Heart left ventricle (tissue), 16 donors: ENCODE measurements at regions of chr1 and their contacts with region 1.

Region 1: GRCh38 chr1:178031856-178032320 is 62.0 kb upstream of the RASAL2 start:
- DNase-seq: peak; percentile 84 to 95 (median 91)
- ATAC-seq: peak; percentile 68 to 89 (median 82)
- H3K4me3 ChIP-seq: no peak overlapping the region
- H3K27ac ChIP-seq: peak overlapping the region in 1 of 12 donors; percentile 53
- H3K4me1 ChIP-seq: peaks cover 0 to 56% (median 8%) of the 10 kb centered on the region in 12 donors
- H3K27me3 ChIP-seq: no peaks in the 10 kb centered on the region
- CTCF ChIP-seq: peak; percentile 79 to 94 (median 88)
- POLR2A ChIP-seq: no peak

Region 2: GRCh38 chr1:177959811-177960515 is 71.9 kb before region 1 on chr1:
- intact Hi-C with region 1: loop called in 2 of 10 experiments (anchors 5 to 10 kb)
- DNase-seq: no peak
- ATAC-seq: peak; percentile 50 to 80 (median 70)
- H3K4me3 ChIP-seq: no peak overlapping the region
- H3K27ac ChIP-seq: no peak overlapping the region
- H3K4me1 ChIP-seq: no peaks in the 10 kb centered on the region
- H3K27me3 ChIP-seq: no peaks in the 10 kb centered on the region
- CTCF ChIP-seq: peak in 10 of 12 donors; percentile 16 to 52 (median 32)
- POLR2A ChIP-seq: no peak

Region 3: DNA sequence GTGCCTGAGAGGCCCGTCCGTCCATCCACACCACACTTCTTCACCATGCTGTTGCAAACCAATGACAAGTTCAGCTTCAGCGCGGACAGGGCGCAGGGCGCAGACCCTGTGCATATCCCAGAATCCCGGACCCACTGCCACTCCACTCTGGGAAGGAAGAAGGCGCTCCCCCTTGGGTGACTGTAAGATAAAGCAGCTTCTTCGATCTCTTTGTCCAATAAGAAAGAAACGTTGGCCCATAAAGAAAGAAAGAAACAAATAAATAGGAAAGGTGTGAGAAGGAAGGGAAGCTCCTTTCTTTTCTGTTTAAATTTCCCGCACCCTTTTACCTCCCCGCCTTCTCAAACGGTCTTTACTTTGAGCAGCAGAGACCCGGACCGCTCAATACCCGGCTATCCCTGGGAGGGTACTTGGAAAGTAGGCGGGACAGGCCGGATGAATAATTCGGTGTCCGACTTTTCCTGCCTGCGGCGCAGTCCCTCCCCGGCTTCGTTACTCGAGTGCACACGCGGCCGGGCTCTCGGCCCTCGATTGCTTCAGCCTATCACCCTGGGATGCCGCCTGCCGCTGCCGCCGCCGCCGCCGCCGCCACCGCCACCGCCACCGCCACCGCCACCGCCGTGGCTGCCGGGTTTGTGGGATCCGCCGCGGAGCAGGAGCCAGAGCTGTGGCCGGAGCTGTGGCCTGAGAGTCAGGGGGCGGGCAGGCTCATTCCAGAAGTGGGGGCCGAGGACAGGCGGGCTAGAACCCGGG is 61.5 kb after region 1 on chr1:
- intact Hi-C with region 1: loop called in 8 of 10 experiments (anchors 1 to 10 kb)
- DNase-seq: peak; percentile 94 to 96 (median 96)
- ATAC-seq: peak; percentile 84 to 93 (median 92)
- H3K4me3 ChIP-seq: peak overlapping the region; percentile 71 to 98 (median 92)
- H3K27ac ChIP-seq: peak overlapping the region; percentile 82 to 96 (median 94)
- H3K4me1 ChIP-seq: peaks cover 2 to 45% (median 29%) of the 10 kb centered on the region in 12 donors
- H3K27me3 ChIP-seq: peaks cover 0 to 4% (median 0%) of the 10 kb centered on the region in 9 donors
- CTCF ChIP-seq: no peak
- POLR2A ChIP-seq: peak in 1 of 2 donors; percentile 28

Region 4: GRCh38 chr1:178189814-178190213 is 157.9 kb after region 1 on chr1:
- intact Hi-C with region 1: loop called in 7 of 10 experiments (anchors 1 to 5 kb)
- DNase-seq: peak in 3 of 5 donors; percentile 36 to 38 (median 36)
- ATAC-seq: peak in 3 of 4 donors; percentile 78 to 79 (median 78)
- H3K4me3 ChIP-seq: no peak overlapping the region
- H3K27ac ChIP-seq: no peak overlapping the region
- H3K4me1 ChIP-seq: peaks cover 0 to 52% (median 17%) of the 10 kb centered on the region in 12 donors
- H3K27me3 ChIP-seq: no peaks in the 10 kb centered on the region
- CTCF ChIP-seq: peak; percentile 40 to 74 (median 56)
- POLR2A ChIP-seq: no peak

Region 5: GRCh38 chr1:178282949-178283367 is 251.1 kb after region 1 on chr1:
- intact Hi-C with region 1: loop called (anchors 2 to 10 kb)
- DNase-seq: no peak
- ATAC-seq: peak in 1 of 4 donors; percentile 50
- H3K4me3 ChIP-seq: no peak overlapping the region
- H3K27ac ChIP-seq: no peak overlapping the region
- H3K4me1 ChIP-seq: peaks cover 0 to 54% (median 26%) of the 10 kb centered on the region in 12 donors
- H3K27me3 ChIP-seq: no peaks in the 10 kb centered on the region
- CTCF ChIP-seq: peak in 11 of 12 donors; percentile 23 to 65 (median 50)
- POLR2A ChIP-seq: no peak

Region 6: GRCh38 chr1:178465011-178465410 is 433.1 kb after region 1 on chr1:
- intact Hi-C with region 1: no loop called
- DNase-seq: no peak
- ATAC-seq: no peak
- H3K4me3 ChIP-seq: no peak overlapping the region
- H3K27ac ChIP-seq: no peak overlapping the region
- H3K4me1 ChIP-seq: peaks cover 0 to 21% (median 3%) of the 10 kb centered on the region in 12 donors
- H3K27me3 ChIP-seq: no peaks in the 10 kb centered on the region
- CTCF ChIP-seq: no peak
- POLR2A ChIP-seq: no peak

Region 7: GRCh38 chr1:178501705-178502329 is 469.9 kb after region 1 on chr1:
- intact Hi-C with region 1: loop called in 1 of 10 experiments (anchors 10 kb)
- DNase-seq: peak; percentile 66 to 84 (median 72)
- ATAC-seq: peak in 3 of 4 donors; percentile 77 to 84 (median 82)
- H3K4me3 ChIP-seq: no peak overlapping the region
- H3K27ac ChIP-seq: no peak overlapping the region
- H3K4me1 ChIP-seq: peaks cover 0 to 7% (median 0%) of the 10 kb centered on the region in 12 donors
- H3K27me3 ChIP-seq: no peaks in the 10 kb centered on the region
- CTCF ChIP-seq: peak; percentile 84 to 96 (median 90)
- POLR2A ChIP-seq: no peak